ENCODE measurements at regions of chr9 and their contacts with region 1.

Region 1: GRCh38 chr9:70602321-70603019 is 188.0 kb upstream of the KLF9 start:
- DNase-seq: peak; percentile 60
- H3K4me3 Mint-ChIP-seq: no peak overlapping the region
- H3K27ac Mint-ChIP-seq: no peak overlapping the region
- H3K4me1 Mint-ChIP-seq: peaks cover 7% of the 10 kb centered on the region
- H3K27me3 Mint-ChIP-seq: no peaks in the 10 kb centered on the region

Region 2: DNA sequence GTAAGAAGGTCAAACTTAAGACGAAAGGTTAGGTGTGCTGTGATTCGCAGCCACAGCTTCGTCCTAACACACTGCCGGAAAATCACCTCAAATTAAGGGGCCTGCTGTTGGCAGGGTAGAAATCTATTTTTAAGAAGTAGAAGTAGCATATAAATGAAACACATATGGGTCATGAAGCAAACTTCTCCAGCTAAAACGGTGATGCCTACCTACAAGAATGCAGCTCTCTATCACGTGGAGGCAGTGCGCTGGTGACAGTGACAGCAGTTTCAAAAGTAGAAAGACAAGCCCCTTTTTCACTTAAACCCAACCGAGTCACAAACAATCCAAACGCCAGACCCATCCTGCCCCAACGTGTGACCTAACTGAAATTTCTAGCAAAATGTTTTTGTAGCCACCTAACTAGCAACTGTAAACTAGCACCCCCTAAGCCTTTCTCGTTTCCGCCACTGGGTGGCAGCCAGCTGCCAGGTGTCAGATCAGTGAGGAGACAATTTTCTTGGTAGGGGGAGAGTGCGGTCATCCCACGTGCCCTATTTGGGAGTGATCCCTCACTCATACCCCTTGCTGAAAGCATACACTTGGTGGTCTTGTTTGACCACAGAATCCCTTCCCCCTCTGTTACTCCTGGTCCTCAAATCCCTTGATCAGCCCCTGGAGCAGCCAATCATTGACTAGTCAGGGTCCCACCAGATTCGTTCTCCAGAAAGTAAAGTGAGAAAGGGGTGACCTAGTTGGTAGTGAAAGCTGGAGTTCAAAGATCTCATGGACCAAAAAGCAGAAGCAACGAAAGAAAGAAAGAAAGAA is 630.6 kb before region 1 on chr9:
- CTCF ChIA-PET with region 1: interaction called, 13 read pairs
- DNase-seq: peak; percentile 70
- H3K4me3 Mint-ChIP-seq: no peak overlapping the region
- H3K27ac Mint-ChIP-seq: no peak overlapping the region
- H3K4me1 Mint-ChIP-seq: no peaks in the 10 kb centered on the region
- H3K27me3 Mint-ChIP-seq: peaks cover 15% of the 10 kb centered on the region

Region 3: GRCh38 chr9:70340572-70340971 is 261.9 kb before region 1 on chr9:
- CTCF ChIA-PET with region 1: interaction called, 42 read pairs
- DNase-seq: no peak
- H3K4me3 Mint-ChIP-seq: no peak overlapping the region
- H3K27ac Mint-ChIP-seq: no peak overlapping the region
- H3K4me1 Mint-ChIP-seq: no peaks in the 10 kb centered on the region
- H3K27me3 Mint-ChIP-seq: no peaks in the 10 kb centered on the region

Region 4: DNA sequence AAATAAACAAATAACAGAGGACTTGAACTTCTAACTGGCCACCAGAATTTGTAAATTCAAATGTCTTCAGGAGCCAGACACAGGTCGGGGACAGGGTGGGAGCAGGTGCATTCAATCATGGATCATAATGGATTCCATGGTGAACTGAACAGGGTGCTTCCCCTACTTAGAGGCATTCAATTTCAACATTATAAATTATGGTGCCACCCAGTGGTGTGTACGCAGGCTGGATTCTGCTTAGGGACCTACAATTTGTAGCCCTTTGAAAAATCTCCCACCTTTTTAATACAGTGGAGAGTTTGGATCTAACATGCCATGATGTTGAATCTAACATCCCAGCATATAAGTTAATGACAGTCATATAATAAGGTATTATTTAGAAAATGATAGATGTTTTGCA is 210.3 kb before region 1 on chr9:
- CTCF ChIA-PET with region 1: interaction called, 24 read pairs
- DNase-seq: peak; percentile 23
- H3K4me3 Mint-ChIP-seq: no peak overlapping the region
- H3K27ac Mint-ChIP-seq: no peak overlapping the region
- H3K4me1 Mint-ChIP-seq: peaks cover 57% of the 10 kb centered on the region
- H3K27me3 Mint-ChIP-seq: no peaks in the 10 kb centered on the region

Region 5: GRCh38 chr9:70420267-70421019 is 182.0 kb before region 1 on chr9:
- CTCF ChIA-PET with region 1: interaction called, 18 read pairs
- DNase-seq: peak; percentile 69
- H3K4me3 Mint-ChIP-seq: peak overlapping the region; percentile 89
- H3K27ac Mint-ChIP-seq: peak overlapping the region; percentile 97
- H3K4me1 Mint-ChIP-seq: peaks cover 45% of the 10 kb centered on the region
- H3K27me3 Mint-ChIP-seq: peaks cover 10% of the 10 kb centered on the region

Region 6: GRCh38 chr9:70462300-70462699 is 140.2 kb before region 1 on chr9:
- CTCF ChIA-PET with region 1: no interaction called
- DNase-seq: no peak
- H3K4me3 Mint-ChIP-seq: no peak overlapping the region
- H3K27ac Mint-ChIP-seq: no peak overlapping the region
- H3K4me1 Mint-ChIP-seq: peaks cover 5% of the 10 kb centered on the region
- H3K27me3 Mint-ChIP-seq: no peaks in the 10 kb centered on the region

Region 7: GRCh38 chr9:70574151-70574837 is 28.2 kb before region 1 on chr9:
- CTCF ChIA-PET with region 1: interaction called, 11 read pairs
- DNase-seq: no peak
- H3K4me3 Mint-ChIP-seq: no peak overlapping the region
- H3K27ac Mint-ChIP-seq: no peak overlapping the region
- H3K4me1 Mint-ChIP-seq: no peaks in the 10 kb centered on the region
- H3K27me3 Mint-ChIP-seq: peaks cover 5% of the 10 kb centered on the region

Region 8: DNA sequence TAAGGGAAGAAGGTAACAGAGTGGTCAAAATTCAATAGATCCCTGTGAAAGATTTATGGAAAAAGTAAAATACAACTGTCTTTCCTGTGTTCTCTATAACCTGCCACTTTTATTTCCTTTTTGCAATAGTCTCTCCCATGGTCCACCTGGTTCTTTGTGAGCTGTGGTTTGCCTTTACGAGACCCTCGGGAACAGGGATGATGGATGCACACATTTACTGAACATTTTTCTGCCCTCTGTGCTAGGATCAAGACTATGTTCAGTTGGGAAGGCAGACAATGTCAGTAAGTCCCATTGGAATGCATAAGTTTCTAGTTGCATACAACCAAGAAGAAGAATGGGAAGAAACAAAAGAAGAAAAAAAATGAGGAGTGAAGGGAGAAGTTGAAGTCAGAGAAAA is 237.8 kb after region 1 on chr9:
- CTCF ChIA-PET with region 1: no interaction called
- DNase-seq: no peak
- H3K4me3 Mint-ChIP-seq: no peak overlapping the region
- H3K27ac Mint-ChIP-seq: no peak overlapping the region
- H3K4me1 Mint-ChIP-seq: no peaks in the 10 kb centered on the region
- H3K27me3 Mint-ChIP-seq: no peaks in the 10 kb centered on the region

Measured in activated naive CD4-positive, alpha-beta T cell treated with anti-CD3 and anti-CD28 coated beads, Interleukin-2, amount 10 ng/mL, durations not matched to agents 7 days and 5 days (primary cell).